WTC11 (cell line): ENCODE measurements at regions of chr20 and their contacts with region 1.

Region 1: DNA sequence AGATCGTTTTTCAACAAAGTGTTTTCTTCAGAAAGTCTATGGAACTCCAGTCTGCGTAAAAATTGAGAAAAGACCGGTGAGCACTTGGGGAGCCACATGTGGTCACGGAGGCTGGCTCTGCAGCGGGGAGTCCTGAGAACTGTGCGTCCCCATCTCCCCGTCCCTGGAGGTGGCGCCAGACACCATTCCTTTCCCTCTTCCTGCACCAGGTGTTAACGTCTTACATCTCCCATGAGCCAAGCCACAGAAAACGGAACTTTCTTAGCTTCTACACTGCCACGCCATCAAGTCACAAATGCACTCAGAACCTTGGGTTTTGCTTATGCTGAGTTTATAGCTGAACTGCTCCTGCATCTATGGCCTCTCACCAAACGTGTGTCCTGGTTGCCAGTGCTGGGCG is 62.6 kb downstream of the GINS1 start:
- DNase-seq: peak; percentile 77
- ATAC-seq: peak; percentile 97
- H3K4me3 Mint-ChIP-seq: no peak overlapping the region
- H3K27ac Mint-ChIP-seq: peak overlapping the region; percentile 88
- H3K4me1 Mint-ChIP-seq: peaks cover 3% of the 10 kb centered on the region; the same call in 1 of the 2 replicates
- H3K27me3 Mint-ChIP-seq: no peaks in the 10 kb centered on the region
- CTCF ChIP-seq: peak; percentile 58; the same call in 1 of the 2 replicates

Region 2: DNA sequence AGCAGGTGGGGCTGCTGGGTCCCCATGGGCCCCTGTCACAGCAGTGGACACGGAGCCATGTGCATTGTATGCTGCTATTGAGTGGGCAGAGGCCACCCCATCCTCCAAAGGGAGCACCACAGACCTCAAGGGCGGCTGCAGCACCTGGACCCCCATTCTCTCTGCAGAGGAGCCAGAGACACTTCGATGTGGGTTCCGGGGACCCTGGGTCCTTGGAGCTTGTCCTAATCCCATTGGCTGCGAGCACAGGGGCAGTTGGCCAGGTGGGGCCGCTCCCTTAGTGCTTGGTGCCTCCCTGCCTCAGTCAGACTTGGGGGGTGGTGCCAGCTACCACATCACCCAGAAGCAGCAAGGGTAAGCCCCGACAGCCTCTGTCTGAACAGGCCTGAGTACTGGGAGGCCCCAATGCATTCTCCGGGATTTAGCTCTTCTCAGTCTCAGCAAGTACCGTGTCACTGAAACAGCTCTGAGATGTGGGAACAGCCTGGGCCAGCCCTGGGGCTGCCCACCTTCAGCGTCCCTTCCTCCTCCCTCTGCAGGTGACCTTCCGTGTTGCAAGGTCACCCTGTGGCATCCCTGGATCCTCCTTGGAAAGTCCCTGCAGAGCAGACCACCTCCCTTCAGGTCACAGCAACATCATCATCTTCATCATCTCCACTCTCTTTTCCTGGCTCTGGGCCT is 11.3 kb after region 1 on chr20:
- CTCF ChIA-PET with region 1: interaction called, 13 read pairs
- POLR2A ChIA-PET with region 1: no interaction called
- DNase-seq: no peak
- ATAC-seq: peak; percentile 41; the same call in 1 of the 2 replicates
- H3K4me3 Mint-ChIP-seq: no peak overlapping the region
- H3K27ac Mint-ChIP-seq: peak overlapping the region; percentile 65; the same call in 1 of the 2 replicates
- H3K4me1 Mint-ChIP-seq: peaks cover 2% of the 10 kb centered on the region
- H3K27me3 Mint-ChIP-seq: no peaks in the 10 kb centered on the region
- CTCF ChIP-seq: no peak

Region 3: DNA sequence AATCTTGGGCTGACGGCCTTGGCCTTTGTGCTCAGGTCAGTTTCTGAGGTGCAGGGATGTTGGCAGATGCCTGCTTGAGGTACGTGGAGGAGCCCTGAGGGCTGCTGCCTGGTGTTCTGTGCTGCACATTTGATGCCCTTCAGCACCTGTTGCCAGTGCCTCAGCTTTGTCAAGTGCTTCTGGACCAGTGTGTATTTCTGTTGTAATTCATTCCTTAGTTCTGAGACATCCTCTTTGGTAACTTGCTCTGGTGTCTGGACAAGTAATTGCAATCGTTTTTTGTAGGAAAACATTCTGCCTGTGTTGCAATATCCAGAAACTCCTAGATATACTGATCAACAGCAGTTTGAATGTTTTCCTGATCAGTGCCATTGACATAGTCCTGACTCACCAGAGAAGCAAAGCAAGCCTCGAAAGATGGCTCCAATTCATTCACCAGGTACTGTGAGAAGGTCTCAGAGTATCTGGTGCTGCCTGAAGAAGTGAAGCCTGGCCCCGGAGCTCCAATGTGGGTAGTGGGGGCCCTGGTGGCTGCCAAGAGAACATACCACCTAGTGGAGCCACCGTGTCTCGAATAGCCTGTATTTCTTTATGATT is 199.9 kb after region 1 on chr20:
- CTCF ChIA-PET with region 1: interaction called, 14 read pairs
- POLR2A ChIA-PET with region 1: no interaction called
- DNase-seq: peak; percentile 30
- ATAC-seq: peak; percentile 91
- H3K4me3 Mint-ChIP-seq: no peak overlapping the region
- H3K27ac Mint-ChIP-seq: no peak overlapping the region
- H3K4me1 Mint-ChIP-seq: no peaks in the 10 kb centered on the region
- H3K27me3 Mint-ChIP-seq: no peaks in the 10 kb centered on the region
- CTCF ChIP-seq: no peak